ENCODE measurements at regions of chr7 and their contacts with region 1.

Region 1: DNA sequence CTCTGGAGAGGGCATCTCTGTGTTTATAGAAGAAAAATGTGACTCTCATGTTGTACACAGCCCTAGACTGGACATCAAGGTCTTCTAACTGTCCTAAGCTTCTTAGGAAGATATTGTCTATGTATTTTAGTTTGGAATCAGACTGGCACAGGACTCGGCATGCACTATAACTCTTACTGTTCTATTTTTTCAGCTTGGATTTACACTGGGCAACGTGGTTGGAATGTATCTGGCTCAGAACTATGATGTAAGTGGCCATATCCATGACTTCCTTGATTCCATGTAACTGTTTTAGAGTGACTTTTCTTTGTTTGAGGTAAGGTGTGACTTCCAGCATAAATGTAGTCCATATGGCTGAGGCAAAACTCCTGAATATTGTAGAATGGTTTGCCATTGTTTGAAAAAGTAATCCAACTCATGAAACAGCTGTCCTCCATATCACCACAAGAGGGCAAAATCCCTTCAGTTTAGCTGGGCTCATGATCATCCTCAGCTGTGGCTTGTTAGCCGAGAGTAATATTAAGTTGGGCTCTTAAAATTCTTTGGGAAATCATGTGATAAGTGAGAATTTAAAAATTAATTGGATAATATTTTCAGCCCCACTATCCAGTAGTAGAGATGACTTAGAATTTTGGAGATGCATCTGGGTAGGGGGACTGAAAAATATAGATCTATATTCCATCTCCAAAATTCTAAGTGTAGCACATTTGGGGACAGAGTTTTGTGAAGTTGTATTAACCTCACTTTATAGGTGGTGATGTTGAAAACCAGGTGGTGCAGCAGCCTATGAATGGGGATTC is 10.4 kb downstream of the STMP1 start:
- DNase-seq: peak; percentile 80
- H3K4me3 ChIP-seq: no peak overlapping the region
- H3K27ac ChIP-seq: peak overlapping the region; percentile 84
- H3K4me1 ChIP-seq: peaks cover 24% of the 10 kb centered on the region
- H3K27me3 ChIP-seq: no peaks in the 10 kb centered on the region
- CTCF ChIP-seq: peak; percentile 70 to 75
- POLR2A ChIP-seq: no peak

Region 2: DNA sequence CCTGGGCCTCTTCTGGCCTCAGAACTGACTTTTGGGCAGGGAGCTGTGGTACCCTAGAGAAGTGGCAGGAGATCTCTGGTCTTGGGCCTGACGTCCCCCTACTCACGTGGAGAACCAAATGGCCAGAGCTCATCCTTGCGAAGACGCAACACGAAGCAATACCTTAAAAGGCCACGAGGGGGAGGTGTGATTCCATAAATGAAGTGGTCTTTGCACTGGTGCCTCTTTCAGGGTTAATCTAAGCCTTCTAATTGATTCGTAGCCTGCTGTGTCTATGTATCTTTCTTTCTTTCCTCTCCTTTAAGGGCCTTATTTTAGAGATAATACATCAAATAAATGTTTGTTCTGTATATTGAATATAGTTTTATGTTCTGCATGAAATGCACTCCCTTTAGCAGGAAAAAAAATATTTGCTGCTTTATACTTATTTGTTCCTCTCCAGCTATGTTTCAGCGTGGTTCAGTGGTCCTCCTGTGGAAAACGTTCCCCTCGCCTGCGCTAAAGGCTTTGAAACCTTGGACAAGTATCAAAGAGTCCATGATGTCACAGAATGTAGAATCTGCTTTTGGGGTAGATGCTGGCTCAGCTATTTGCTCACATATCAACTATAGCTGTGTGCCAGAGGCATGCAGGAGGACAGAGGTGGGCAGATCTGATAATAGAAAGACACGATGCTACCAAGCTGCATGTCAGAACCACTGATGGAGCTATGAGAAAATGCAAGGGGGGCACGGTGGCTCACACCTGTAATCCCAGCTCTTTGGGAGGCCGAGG is 398.1 kb before region 1 on chr7:
- CTCF ChIA-PET with region 1: interaction called, 17 read pairs
- POLR2A ChIA-PET with region 1: no interaction called
- dilution Hi-C with region 1: no loop called
- intact Hi-C with region 1: no loop called
- DNase-seq: peak; percentile 81
- H3K4me3 ChIP-seq: no peak overlapping the region
- H3K27ac ChIP-seq: no peak overlapping the region
- H3K4me1 ChIP-seq: no peaks in the 10 kb centered on the region
- H3K27me3 ChIP-seq: peaks cover 0 to 2% of the 10 kb centered on the region in 2 experiments
- CTCF ChIP-seq: peak; percentile 69 to 73
- POLR2A ChIP-seq: no peak

Region 3: DNA sequence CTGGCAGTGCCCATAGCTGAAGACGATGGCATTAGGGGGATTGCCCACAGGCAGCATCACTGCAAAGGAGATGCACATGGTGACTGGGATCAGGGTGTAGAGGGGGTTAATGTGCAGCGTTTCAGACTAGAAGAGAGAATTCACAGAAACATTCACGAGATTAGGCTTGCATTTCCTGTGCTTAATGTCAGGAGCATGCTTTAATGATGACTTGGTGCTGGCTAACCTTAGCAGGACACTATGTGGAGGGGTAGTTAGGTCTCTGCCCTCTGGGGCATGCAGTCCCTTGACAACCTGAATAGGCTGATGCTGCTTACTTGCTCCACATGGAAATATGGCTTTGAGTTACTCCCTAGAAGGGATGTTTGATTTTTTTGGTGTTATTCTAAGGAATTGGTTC is 11.4 kb after region 1 on chr7:
- CTCF ChIA-PET with region 1: interaction called, 53 read pairs
- POLR2A ChIA-PET with region 1: no interaction called
- dilution Hi-C with region 1: no loop called
- intact Hi-C with region 1: no loop called
- DNase-seq: no peak
- H3K4me3 ChIP-seq: no peak overlapping the region
- H3K27ac ChIP-seq: no peak overlapping the region
- H3K4me1 ChIP-seq: peaks cover 16% of the 10 kb centered on the region
- H3K27me3 ChIP-seq: no peaks in the 10 kb centered on the region
- CTCF ChIP-seq: no peak
- POLR2A ChIP-seq: no peak

Region 4: DNA sequence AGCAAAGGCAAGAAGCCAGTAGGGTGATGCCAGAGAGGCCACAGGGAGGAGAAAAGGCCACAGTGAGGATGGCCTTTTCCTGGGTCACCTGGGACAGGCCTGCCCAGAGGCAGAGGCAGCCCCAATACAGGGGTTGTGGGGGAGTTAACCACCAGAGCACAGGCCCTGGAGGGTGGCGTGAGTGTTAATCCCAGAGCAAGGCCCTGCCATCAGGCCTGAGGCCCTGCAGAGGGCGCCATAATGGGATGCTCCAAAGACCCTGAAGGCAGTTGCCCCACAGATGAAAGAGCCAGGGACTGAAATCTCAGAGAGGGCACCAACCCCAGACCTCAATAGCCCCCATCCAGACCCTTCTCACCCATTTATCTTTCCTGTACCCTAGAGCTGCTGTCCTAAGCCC is 31.3 kb after region 1 on chr7:
- CTCF ChIA-PET with region 1: interaction called, 12 read pairs
- POLR2A ChIA-PET with region 1: no interaction called
- dilution Hi-C with region 1: no loop called
- intact Hi-C with region 1: no loop called
- DNase-seq: no peak
- H3K4me3 ChIP-seq: no peak overlapping the region
- H3K27ac ChIP-seq: no peak overlapping the region
- H3K4me1 ChIP-seq: peaks cover 6% of the 10 kb centered on the region
- H3K27me3 ChIP-seq: no peaks in the 10 kb centered on the region
- CTCF ChIP-seq: peak; percentile 24 to 31
- POLR2A ChIP-seq: no peak

Region 5: GRCh38 chr7:135745703-135746312 is 73.0 kb after region 1 on chr7:
- CTCF ChIA-PET with region 1: interaction called, 4 read pairs
- POLR2A ChIA-PET with region 1: no interaction called
- dilution Hi-C with region 1: no loop called
- intact Hi-C with region 1: loop called (anchors 2 kb)
- DNase-seq: peak; percentile 87
- H3K4me3 ChIP-seq: no peak overlapping the region
- H3K27ac ChIP-seq: peak overlapping the region; percentile 60
- H3K4me1 ChIP-seq: peaks cover 11% of the 10 kb centered on the region
- H3K27me3 ChIP-seq: no peaks in the 10 kb centered on the region
- CTCF ChIP-seq: no peak
- POLR2A ChIP-seq: peak; percentile 54

Region 6: DNA sequence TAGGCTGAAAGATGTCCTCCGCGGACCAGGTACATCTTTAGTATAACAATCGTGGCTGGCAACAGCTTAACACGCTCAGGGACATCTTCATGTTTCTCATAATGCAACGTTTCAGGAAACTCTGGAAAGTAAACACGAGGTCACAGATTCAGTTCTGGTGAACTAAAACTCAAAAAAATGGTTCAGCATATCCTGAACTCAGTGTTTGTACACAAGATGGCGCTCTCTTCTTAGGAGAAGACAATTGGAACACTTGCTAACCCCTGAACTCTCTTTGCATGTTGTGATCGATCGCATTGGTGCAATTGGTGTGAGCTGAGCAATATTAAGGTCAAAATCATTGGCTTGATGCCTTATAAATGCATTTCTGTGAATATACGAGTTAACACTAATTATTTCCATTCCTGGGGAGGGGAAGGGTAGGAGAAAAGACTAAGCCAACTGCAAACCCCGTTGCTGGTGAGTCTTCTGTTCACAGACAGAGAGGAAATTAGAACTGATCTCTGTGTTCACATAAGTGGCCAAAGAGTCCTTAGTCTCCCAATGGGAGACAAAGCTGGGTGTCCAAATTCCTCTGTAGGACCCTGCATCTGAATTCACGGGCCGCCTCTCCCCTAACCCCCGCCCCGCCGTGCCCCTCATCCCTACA is 128.4 kb after region 1 on chr7:
- CTCF ChIA-PET with region 1: interaction called, 76 read pairs
- POLR2A ChIA-PET with region 1: no interaction called
- dilution Hi-C with region 1: no loop called
- intact Hi-C with region 1: loop called (anchors 1 kb)
- DNase-seq: peak; percentile 66
- H3K4me3 ChIP-seq: no peak overlapping the region
- H3K27ac ChIP-seq: no peak overlapping the region
- H3K4me1 ChIP-seq: no peaks in the 10 kb centered on the region
- H3K27me3 ChIP-seq: peaks cover 0 to 3% of the 10 kb centered on the region in 2 experiments
- CTCF ChIP-seq: peak; percentile 63 to 70
- POLR2A ChIP-seq: no peak

Region 7: GRCh38 chr7:135977007-135977741 is 304.4 kb after region 1 on chr7 and contains the start of gene MTPN:
- CTCF ChIA-PET with region 1: interaction called, 3 read pairs
- POLR2A ChIA-PET with region 1: no interaction called
- dilution Hi-C with region 1: no loop called
- intact Hi-C with region 1: loop called (anchors 2 kb)
- DNase-seq: peak; percentile 98
- H3K4me3 ChIP-seq: peak within 1 kb of the TSS; percentile 90 to 96 (median 91)
- H3K27ac ChIP-seq: peak within 1 kb of the TSS; percentile 81
- H3K4me1 ChIP-seq: peaks cover 53% of the 10 kb centered on the region
- H3K27me3 ChIP-seq: no peaks in the 10 kb centered on the region
- CTCF ChIP-seq: no peak
- POLR2A ChIP-seq: peak; percentile 71
- total RNA-seq, gene MTPN: 171 and 174 TPM in 2 replicates

Region 8: GRCh38 chr7:137519947-137520346 is 1847.2 kb after region 1 on chr7:
- CTCF ChIA-PET with region 1: no interaction called
- POLR2A ChIA-PET with region 1: no interaction called
- dilution Hi-C with region 1: no loop called
- intact Hi-C with region 1: no loop called
- DNase-seq: no peak
- H3K4me3 ChIP-seq: no peak overlapping the region
- H3K27ac ChIP-seq: no peak overlapping the region
- H3K4me1 ChIP-seq: no peaks in the 10 kb centered on the region
- H3K27me3 ChIP-seq: peaks cover 0 to 6% of the 10 kb centered on the region in 2 experiments
- CTCF ChIP-seq: no peak
- POLR2A ChIP-seq: no peak

Measured in endothelial cell of umbilical vein (primary cell).